AG04450 (cell line): ENCODE measurements at regions of chr10 and their contacts with region 1.

Region 1: DNA sequence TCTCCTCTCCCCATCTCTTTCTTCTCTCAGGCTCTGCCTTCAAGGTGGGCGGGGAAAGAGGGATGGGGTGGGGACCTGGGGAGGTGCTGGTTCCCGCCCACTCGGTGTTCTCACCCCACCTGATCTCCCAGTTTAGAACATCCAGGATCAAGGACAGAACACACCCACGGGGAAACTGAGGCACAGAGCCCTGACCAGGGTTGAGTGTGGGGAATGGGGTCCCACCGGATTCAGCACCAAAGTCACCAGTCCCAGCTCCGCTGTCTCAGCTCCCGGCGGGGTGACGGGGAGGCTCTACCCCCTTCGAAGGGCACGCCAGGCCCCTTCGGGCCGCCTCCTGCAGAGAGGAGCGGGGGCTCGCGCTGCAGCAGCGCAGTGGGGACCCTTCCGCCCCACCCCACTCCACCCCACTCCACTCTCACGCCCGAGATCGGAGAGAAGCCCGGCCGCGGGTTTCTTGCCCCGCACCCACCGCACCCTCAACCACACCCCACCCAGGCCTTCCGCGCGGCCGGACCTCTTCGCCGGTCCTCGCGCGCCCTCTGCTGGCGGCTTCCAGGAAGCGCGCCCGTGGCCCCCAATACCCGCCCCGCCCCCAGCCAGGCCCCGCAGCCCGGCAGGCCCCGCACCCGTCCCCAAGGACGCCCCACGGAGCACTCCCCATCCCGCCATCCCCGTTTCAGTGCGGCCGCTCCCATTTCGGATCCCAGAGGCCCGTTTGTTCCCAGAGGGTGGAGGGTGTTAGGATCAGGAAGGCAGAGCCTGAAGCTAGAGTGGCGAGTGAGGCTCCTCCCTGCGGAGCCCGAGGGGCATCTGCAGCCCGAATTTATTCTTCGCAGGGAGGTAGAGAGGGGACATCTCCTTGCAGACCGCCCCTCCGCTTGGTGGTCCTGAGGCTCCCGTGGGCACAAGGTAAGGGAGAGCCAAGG is 18.0 kb downstream of the POLL start:
- DNase-seq: peak; percentile 21
- H3K4me3 ChIP-seq: peak overlapping the region; percentile 68
- H3K27ac ChIP-seq: no peak overlapping the region
- H3K27me3 ChIP-seq: peaks cover 35% of the 10 kb centered on the region
- CTCF ChIP-seq: peak; percentile 70

Region 2: GRCh38 chr10:101060036-101060950 is 509.8 kb before region 1 on chr10:
- CTCF ChIA-PET with region 1: interaction called, 13 read pairs
- POLR2A ChIA-PET with region 1: no interaction called
- DNase-seq: peak; percentile 85
- H3K4me3 ChIP-seq: peak overlapping the region; percentile 100
- H3K27ac ChIP-seq: peak overlapping the region; percentile 98
- H3K27me3 ChIP-seq: no peaks in the 10 kb centered on the region
- CTCF ChIP-seq: peak; percentile 88

Region 3: DNA sequence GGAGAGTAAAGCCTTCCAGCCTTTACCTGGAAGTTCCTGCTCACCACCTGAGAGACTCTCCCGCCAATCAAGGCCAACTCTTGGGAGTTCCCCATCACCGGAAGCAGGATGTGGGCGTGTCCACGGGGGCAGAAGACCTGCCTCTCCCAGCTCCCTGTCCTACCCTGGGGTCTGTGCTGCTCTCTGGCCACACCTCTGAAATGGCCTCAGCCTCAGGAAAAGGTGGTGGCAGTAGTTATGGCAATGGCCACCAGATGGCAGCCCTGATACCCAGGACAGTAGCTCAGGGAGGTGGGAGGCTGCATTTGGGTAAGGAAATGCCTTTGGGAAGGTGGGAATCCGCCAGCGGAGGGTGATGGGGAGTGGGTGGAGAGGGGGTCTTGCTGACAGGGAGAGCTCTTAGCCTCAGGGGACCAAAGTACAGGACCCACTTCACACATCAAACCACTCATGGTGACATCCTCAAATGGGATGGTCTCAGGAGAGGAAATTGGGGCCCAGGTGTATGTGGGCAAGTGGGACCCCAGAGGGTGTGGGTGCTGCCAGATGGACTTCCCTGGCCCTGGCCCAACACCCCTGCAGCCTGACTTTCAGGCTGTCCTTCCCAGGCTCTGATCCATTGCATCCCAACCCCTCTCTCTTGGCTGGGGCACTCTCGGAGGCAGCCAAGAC is 474.4 kb before region 1 on chr10:
- CTCF ChIA-PET with region 1: interaction called, 18 read pairs
- POLR2A ChIA-PET with region 1: no interaction called
- DNase-seq: peak; percentile 11
- H3K4me3 ChIP-seq: no peak overlapping the region
- H3K27ac ChIP-seq: no peak overlapping the region
- H3K27me3 ChIP-seq: peaks cover 66% of the 10 kb centered on the region
- CTCF ChIP-seq: peak; percentile 83

Region 4: DNA sequence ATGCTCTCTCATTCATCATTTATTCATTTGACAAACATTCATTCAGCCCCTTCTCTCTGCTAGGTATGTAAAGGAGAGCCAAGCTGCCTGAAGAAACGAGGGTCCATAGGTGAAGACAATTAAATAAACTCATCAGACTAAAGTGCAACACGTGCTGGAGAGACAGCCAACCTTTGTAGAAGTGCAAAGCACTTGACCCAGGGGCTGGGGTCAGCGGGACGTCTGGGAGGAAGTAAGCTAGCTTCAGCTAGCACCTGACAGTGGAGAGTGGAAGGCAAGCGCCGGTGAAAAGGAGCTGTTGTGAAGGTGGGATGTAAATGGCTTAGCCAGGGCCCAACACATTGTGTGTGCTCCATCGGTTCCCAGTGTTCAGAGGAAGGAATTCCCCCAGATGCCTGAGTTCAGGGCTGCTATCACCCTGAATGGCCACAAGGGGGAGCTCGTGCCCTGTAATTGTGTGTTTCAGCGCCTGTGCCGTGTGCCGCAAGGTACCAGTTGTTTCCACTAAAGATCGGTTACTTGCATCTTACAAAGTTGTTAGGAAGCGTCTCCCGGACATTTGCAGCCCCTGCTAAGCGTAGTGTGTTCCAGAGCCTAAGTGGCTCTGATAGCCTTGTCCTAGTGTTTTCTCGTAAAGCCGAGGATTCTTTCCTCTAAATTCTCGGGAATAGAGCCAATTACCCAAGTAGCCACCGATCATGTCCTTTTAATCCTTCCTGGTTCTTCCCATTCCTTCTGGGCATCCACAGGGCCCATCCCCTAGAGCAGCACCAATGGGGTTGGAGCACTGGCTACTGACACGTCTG is 408.4 kb before region 1 on chr10:
- CTCF ChIA-PET with region 1: interaction called, 10 read pairs
- POLR2A ChIA-PET with region 1: no interaction called
- DNase-seq: peak; percentile 43
- H3K4me3 ChIP-seq: peak overlapping the region; percentile 57
- H3K27ac ChIP-seq: no peak overlapping the region
- H3K27me3 ChIP-seq: peaks cover 42% of the 10 kb centered on the region
- CTCF ChIP-seq: peak; percentile 94

Region 5: DNA sequence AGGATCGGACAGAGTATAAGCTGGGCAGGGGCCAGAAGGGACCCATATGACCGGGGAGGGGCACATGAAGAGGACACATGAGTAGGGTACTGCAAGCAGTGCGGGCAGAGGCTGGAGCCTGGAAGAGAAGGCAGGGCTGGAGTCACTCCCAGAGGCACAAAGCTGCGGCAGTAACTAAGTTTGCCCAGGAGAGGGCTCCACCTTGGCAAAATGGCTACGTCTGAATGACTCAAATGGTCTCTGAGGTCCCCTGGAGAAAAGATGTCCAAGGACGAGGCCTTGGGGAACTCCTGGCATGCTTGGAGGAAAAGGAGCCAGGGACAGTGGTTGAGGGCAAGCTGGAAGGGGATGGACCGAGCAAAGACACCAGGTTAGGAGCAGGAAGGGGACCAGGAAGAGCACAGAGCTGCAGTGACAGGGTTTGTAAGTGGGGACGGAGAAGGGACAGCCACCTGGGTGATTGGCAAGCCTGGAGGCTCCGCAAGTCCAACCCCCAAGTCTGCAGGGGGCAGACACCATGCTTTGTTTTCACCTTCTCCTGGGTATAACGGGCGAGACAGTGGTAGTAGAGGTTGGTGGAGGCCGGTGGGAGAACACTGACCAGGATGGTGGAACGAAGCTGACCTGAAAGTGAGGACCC is 297.8 kb before region 1 on chr10:
- CTCF ChIA-PET with region 1: interaction called, 11 read pairs
- POLR2A ChIA-PET with region 1: no interaction called
- DNase-seq: peak; percentile 21
- H3K4me3 ChIP-seq: no peak overlapping the region
- H3K27ac ChIP-seq: no peak overlapping the region
- H3K27me3 ChIP-seq: peaks cover 17% of the 10 kb centered on the region
- CTCF ChIP-seq: peak; percentile 79

Region 6: GRCh38 chr10:101301249-101301711 is 268.8 kb before region 1 on chr10:
- CTCF ChIA-PET with region 1: interaction called, 30 read pairs
- POLR2A ChIA-PET with region 1: no interaction called
- DNase-seq: peak; percentile 13
- H3K4me3 ChIP-seq: no peak overlapping the region
- H3K27ac ChIP-seq: no peak overlapping the region
- H3K27me3 ChIP-seq: peaks cover 73% of the 10 kb centered on the region
- CTCF ChIP-seq: peak; percentile 60

Region 7: DNA sequence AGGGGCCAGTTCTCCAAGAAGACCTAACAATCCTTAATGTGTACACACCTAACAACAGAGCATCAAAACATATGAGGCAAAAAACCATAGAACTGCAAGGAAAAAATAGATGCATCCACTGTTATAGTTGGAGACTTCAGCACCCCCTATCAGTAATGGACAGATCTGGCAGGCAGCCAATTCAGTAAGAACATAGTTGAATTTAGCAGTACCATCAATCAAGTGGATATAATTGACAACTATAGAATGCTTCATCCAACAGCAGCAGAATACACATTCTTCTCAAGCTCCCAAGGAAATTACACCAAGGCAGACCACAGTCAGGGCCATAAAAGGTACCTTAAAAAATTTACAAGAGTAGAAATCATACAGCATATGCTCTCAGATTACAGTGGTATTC is 24.2 kb before region 1 on chr10:
- CTCF ChIA-PET with region 1: interaction called, 10 read pairs
- POLR2A ChIA-PET with region 1: no interaction called
- DNase-seq: no peak
- H3K4me3 ChIP-seq: no peak overlapping the region
- H3K27ac ChIP-seq: no peak overlapping the region
- H3K27me3 ChIP-seq: no peaks in the 10 kb centered on the region
- CTCF ChIP-seq: no peak

Region 8: GRCh38 chr10:102310361-102311024 is 740.4 kb after region 1 on chr10:
- CTCF ChIA-PET with region 1: no interaction called
- POLR2A ChIA-PET with region 1: no interaction called
- DNase-seq: no peak
- H3K4me3 ChIP-seq: no peak overlapping the region
- H3K27ac ChIP-seq: peak overlapping the region; percentile 57
- H3K27me3 ChIP-seq: no peaks in the 10 kb centered on the region
- CTCF ChIP-seq: no peak